ENCODE measurements at regions of chr6 and their contacts with region 1.

Region 1: DNA sequence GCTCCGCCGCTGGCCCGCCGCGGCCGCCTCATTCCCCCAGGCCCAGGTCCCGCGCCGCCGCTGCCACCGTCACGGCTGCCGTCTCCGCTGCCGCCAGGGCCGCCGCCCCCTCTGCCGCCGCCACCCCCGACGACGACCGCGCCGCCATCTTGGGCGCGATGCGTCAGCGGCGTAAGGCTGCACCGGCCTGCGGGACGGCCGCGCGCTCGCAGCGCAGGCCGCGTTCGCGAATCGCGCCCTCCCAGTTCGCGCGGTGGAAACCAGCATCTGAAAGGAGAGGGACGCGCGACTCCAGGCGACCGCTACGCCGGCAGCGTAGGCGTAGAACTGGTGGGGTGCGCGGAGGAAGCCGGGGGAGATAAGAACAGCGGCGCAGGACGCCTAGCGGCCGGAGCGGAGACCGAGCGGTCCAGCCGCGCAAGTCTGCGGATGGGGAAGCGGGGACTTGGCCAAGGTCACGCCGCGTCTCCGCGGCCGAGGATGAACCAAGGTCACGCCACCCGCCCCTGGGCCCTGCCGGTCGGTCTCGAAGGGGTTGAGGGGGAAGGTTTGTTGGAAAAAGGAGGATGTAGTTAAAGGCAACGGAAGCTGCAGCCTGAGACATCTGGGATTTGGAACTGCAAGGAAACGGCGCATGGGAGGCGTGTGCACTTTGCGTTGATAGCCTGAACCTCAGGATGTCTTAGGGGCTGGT is at the start of gene NUDT3:
- DNase-seq: peak; percentile 88 to 98 (median 93)
- ATAC-seq: peak; percentile 93
- H3K4me3 ChIP-seq: peak within 1 kb of the TSS; percentile 92
- H3K4me3 Mint-ChIP-seq: peak within 1 kb of the TSS in 4 of 10 donors; percentile 79 to 99 (median 98)
- H3K27ac ChIP-seq: peak within 1 kb of the TSS; percentile 85
- H3K27ac Mint-ChIP-seq: peak within 1 kb of the TSS in 8 of 9 donors; percentile 89 to 95 (median 92)
- H3K4me1 ChIP-seq: peaks cover 11 to 16% of the 10 kb centered on the region in 2 donors
- H3K4me1 Mint-ChIP-seq: peaks cover 0 to 28% (median 23%) of the 10 kb centered on the region in 7 donors
- H3K27me3 ChIP-seq: no peaks in the 10 kb centered on the region
- H3K27me3 Mint-ChIP-seq: peaks cover 0 to 2% (median 0%) of the 10 kb centered on the region in 5 donors
- total RNA-seq, gene NUDT3: 16.2 to 29.7 (median 25.4) TPM

Region 2: GRCh38 chr6:34414999-34415858 is 22.6 kb after region 1 on chr6:
- CTCF ChIA-PET with region 1: interaction called, 3 read pairs
- POLR2A ChIA-PET with region 1: no interaction called
- intact Hi-C with region 1: loop called in 1 of 2 experiments (anchors 2 kb)
- DNase-seq: peak in 7 of 9 donors; percentile 38 to 63 (median 56)
- ATAC-seq: peak; percentile 88
- H3K4me3 ChIP-seq: no peak overlapping the region
- H3K4me3 Mint-ChIP-seq: no peak overlapping the region
- H3K27ac ChIP-seq: no peak overlapping the region
- H3K27ac Mint-ChIP-seq: peak overlapping the region in 4 of 9 donors; percentile 17 to 56 (median 45)
- H3K4me1 ChIP-seq: no peaks in the 10 kb centered on the region
- H3K4me1 Mint-ChIP-seq: peaks cover 0 to 17% (median 9%) of the 10 kb centered on the region in 7 donors
- H3K27me3 ChIP-seq: no peaks in the 10 kb centered on the region
- H3K27me3 Mint-ChIP-seq: no peaks in the 10 kb centered on the region

Region 3: DNA sequence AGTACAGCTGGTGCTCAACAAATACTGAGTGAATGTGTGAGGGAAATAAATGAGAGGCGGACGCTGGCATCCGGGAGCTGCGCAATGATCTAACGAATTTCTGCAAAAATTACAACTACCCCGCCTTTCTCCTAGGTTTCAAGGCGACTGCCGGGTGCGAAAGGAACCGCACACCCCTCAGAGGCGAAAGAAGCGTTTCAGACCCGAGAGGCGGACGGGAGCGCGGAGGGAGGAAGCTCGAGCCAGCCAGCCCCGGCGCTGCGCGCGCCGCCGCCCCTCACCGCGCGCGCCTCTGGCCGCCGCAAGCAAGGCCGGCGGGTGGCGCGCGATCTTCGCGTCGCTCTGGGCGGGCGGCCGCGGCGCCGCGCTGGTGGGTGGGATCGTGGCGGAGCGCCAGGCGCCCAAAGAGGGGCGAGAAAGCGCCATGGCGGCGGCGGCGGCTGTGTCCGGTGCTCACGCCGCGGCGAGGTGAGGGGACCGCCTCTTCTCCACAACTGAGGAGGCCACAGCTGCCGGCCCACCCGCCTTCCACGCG is 399.1 kb after region 1 on chr6 and contains the start of gene BLTP3A:
- CTCF ChIA-PET with region 1: no interaction called
- POLR2A ChIA-PET with region 1: no interaction called
- intact Hi-C with region 1: loop called in 1 of 2 experiments (anchors 2 kb)
- DNase-seq: peak; percentile 60 to 85 (median 73)
- ATAC-seq: peak; percentile 97
- H3K4me3 ChIP-seq: peak within 1 kb of the TSS; percentile 100
- H3K4me3 Mint-ChIP-seq: peak within 1 kb of the TSS; percentile 92 to 100 (median 98)
- H3K27ac ChIP-seq: peak within 1 kb of the TSS; percentile 79
- H3K27ac Mint-ChIP-seq: peak within 1 kb of the TSS; percentile 88 to 97 (median 96)
- H3K4me1 ChIP-seq: peaks cover 8 to 15% of the 10 kb centered on the region in 2 donors
- H3K4me1 Mint-ChIP-seq: peaks cover 24 to 38% (median 30%) of the 10 kb centered on the region in 7 donors
- H3K27me3 ChIP-seq: no peaks in the 10 kb centered on the region
- H3K27me3 Mint-ChIP-seq: no peaks in the 10 kb centered on the region
- total RNA-seq, gene BLTP3A: 10.7 to 12.9 (median 11.9) TPM

Measured in naive thymus-derived CD4-positive, alpha-beta T cell (primary cell).